ENCODE measurements at regions of chr13 and their contacts with region 1.

Region 1: GRCh38 chr13:106917673-106918556 is 350.0 kb upstream of the ARGLU1 start:
- DNase-seq: peak; percentile 77 to 91
- H3K4me3 ChIP-seq: peak overlapping the region; percentile 44
- H3K4me3 Mint-ChIP-seq: peak overlapping the region; percentile 74
- H3K27ac Mint-ChIP-seq: peak overlapping the region; percentile 92
- H3K4me1 ChIP-seq: peaks cover 25% of the 10 kb centered on the region
- H3K4me1 Mint-ChIP-seq: peaks cover 34% of the 10 kb centered on the region
- H3K27me3 ChIP-seq: no peaks in the 10 kb centered on the region
- H3K27me3 Mint-ChIP-seq: no peaks in the 10 kb centered on the region
- CTCF ChIP-seq: peak; percentile 96

Region 2: DNA sequence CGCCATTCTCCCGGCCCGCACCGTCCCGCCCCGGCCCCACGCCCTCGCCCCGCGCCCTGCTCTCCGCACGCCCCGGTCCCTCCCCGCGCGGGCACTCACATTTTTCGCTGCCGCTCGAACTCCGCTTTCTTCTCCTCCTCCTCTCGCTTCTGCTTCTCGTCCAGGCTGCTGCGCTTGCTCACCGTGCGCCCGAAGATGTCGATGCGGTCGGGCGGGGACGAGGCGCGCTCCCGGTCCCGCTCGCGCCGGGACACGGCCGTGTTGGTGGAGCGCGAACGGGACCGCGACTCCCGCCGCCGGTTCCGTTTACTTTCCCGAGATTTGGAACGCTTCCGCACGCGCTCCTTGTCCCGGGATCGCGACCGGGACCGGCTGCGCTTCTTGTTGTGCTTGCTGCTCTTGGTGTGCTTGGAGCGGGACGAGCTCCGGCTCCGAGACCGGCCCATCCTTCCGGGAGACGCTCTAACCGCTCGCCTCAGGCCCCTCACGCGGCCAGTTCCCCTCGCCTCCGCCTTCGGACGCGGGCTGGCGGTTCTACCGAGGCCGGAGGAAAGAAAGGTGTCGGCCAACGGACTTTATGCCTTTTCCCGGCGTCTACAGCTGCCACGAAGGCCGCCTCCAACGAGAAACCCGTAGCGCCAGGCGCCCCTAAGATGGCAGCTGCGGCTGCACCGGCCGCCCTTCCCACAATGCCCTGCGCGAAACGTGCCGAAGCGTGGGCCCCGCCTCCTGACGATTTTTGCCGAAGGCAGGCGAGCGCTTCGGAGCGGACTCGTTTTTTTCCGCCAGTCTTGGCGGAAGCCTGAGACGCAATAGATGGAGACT is 350.2 kb before region 1 on chr13 and contains the start of gene ARGLU1:
- CTCF ChIA-PET with region 1: no interaction called
- POLR2A ChIA-PET with region 1: no interaction called
- intact Hi-C with region 1: loop called (anchors 1 kb)
- DNase-seq: peak; percentile 93 to 97
- H3K4me3 ChIP-seq: peak within 1 kb of the TSS; percentile 93
- H3K4me3 Mint-ChIP-seq: peak within 1 kb of the TSS; percentile 87
- H3K27ac Mint-ChIP-seq: peak within 1 kb of the TSS; percentile 95
- H3K4me1 ChIP-seq: peaks cover 41% of the 10 kb centered on the region
- H3K4me1 Mint-ChIP-seq: peaks cover 16% of the 10 kb centered on the region
- H3K27me3 ChIP-seq: no peaks in the 10 kb centered on the region
- H3K27me3 Mint-ChIP-seq: no peaks in the 10 kb centered on the region
- CTCF ChIP-seq: no peak
- total RNA-seq, gene ARGLU1: 127 and 137 TPM in 2 replicates

Region 3: DNA sequence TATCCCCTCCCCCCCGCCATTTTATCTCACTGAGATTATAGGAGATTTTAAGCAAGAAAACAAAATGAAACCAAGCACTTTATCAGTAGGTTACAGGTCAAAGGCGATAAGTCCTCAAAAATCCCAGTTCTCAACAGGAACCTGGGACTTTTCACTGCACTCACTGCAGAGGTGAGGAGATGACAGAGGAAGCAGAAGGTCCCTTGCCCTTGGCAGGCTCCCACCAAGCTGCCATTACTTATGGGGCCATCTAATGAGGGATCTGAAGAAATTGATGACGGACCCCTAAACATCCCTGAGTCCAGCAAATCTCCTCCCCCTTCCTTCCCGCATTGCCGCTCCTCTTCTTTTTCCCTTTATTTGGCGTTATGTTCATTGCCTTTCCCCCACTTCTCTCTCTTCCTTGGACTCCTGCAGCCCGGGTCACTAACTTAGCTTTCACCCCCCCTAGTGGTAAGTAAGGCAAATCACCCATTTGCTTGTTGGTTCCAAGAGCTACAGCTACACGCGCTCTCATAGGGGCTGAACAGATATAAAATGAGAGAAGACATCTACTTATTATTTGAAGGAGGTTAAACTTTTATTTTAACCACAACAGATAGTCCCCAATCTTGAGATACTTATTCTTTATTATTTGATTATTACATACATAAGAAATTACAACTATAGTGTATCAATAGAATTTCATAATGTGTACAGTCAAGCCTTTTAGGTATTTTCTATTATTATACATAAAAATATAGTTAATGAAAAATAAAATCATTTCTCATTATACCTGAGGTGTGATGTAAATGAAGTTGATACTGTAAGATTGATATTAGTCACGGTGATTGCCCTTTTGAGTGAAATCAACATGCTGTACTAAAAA is 298.0 kb before region 1 on chr13:
- CTCF ChIA-PET with region 1: interaction called, 6 read pairs
- POLR2A ChIA-PET with region 1: no interaction called
- intact Hi-C with region 1: loop called (anchors 1 kb)
- DNase-seq: peak in 1 of 2 experiments; percentile 53
- H3K4me3 ChIP-seq: 0 out of 2 replicates have a peak overlapping the region, but pooled peaks have one; percentile 2
- H3K4me3 Mint-ChIP-seq: peak overlapping the region; percentile 6
- H3K27ac Mint-ChIP-seq: no peak overlapping the region
- H3K4me1 ChIP-seq: peaks cover 8% of the 10 kb centered on the region; the same call in 1 of the 2 replicates
- H3K4me1 Mint-ChIP-seq: no peaks in the 10 kb centered on the region
- H3K27me3 ChIP-seq: no peaks in the 10 kb centered on the region
- H3K27me3 Mint-ChIP-seq: no peaks in the 10 kb centered on the region
- CTCF ChIP-seq: peak; percentile 80 to 90

Region 4: DNA sequence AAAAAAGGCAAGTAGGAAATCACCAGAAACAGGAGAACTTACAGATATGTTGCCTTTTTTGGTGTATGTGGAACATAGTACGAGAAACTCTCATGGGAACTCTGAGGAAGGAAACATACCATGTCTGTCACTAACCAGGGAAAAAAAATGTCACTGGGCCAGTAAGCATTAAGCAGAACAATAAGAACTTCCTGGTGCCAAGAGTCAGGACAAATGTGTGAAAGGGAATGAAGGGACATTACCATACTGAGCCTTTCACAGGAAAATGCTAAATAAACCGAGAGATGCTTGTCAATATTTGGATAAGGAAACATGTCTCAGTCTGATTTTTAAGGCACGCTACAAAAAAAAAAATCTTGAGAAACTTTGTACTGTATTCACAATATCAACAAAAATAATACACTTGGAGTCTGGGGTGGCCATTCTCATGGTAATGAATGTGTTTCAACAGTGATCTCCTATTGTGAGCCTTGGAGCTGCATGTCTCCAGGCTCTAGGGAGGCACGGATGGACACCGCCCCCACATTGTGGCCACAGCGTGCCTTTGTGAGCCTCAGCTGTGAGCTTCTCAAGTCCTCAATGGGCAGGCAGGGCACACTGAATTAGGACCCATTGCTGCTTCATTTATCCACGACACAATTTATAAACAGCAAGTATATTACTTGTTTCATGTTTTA is 237.0 kb before region 1 on chr13:
- CTCF ChIA-PET with region 1: no interaction called
- POLR2A ChIA-PET with region 1: no interaction called
- intact Hi-C with region 1: loop called (anchors 5 kb)
- DNase-seq: no peak
- H3K4me3 ChIP-seq: no peak overlapping the region
- H3K4me3 Mint-ChIP-seq: no peak overlapping the region
- H3K27ac Mint-ChIP-seq: no peak overlapping the region
- H3K4me1 ChIP-seq: peaks cover 43% of the 10 kb centered on the region
- H3K4me1 Mint-ChIP-seq: peaks cover 50% of the 10 kb centered on the region
- H3K27me3 ChIP-seq: no peaks in the 10 kb centered on the region
- H3K27me3 Mint-ChIP-seq: no peaks in the 10 kb centered on the region
- CTCF ChIP-seq: no peak

Region 5: DNA sequence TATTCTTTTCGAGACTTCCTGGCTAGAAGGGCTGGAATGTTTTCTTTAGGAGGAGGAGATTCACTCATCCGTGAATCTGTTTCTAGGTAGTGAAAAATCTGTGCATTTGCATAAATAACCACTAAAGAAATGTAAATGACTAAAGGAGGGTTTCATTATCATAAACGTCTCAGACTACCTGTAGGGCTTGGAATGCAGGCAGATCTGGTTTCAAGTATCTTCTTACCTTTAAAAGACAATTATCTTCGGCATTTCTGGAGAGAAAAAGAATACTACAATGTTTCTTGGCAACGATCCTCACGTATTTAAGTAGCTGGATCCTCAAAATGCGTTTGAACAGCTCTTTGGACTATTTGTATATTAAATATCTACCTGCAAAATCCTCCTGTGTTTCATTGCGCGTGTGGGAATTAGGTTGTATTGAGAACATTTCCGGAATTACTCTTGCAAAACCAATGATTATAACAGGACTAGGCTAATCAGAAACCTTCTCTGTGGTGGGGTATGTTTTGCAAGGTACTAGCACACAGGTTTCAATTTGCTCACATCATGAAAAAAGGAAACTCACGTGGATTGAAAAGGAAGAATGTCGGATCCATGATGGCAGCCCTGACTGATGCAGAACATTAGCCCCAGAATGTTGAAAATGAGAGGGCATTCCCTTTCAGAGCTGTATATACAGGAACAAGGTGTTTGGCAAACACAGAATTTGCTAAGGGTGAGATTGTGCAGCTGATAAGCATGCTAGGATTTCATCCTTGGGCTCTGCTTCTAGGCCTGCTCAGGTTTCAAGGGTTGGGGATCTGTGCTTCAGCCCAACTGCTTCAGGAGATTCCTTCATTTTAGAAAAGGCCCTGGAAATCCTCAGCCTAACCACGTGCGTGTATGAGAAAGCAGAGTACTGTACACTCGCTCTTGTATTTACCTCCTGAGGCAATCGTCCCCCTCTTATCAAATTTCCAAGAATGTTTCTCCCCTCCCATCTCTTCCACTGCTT is 58.7 kb before region 1 on chr13:
- CTCF ChIA-PET with region 1: no interaction called
- POLR2A ChIA-PET with region 1: no interaction called
- intact Hi-C with region 1: loop called (anchors 1 kb)
- DNase-seq: peak; percentile 63 to 75
- H3K4me3 ChIP-seq: no peak overlapping the region
- H3K4me3 Mint-ChIP-seq: peak overlapping the region; percentile 41
- H3K27ac Mint-ChIP-seq: peak overlapping the region; percentile 80
- H3K4me1 ChIP-seq: peaks cover 44% of the 10 kb centered on the region
- H3K4me1 Mint-ChIP-seq: peaks cover 23% of the 10 kb centered on the region
- H3K27me3 ChIP-seq: no peaks in the 10 kb centered on the region
- H3K27me3 Mint-ChIP-seq: no peaks in the 10 kb centered on the region
- CTCF ChIP-seq: no peak

Region 6: GRCh38 chr13:106996867-106997618 is 79.1 kb after region 1 on chr13:
- CTCF ChIA-PET with region 1: no interaction called
- POLR2A ChIA-PET with region 1: interaction called, 3 read pairs
- intact Hi-C with region 1: loop called (anchors 2 kb)
- DNase-seq: peak; percentile 63 to 76
- H3K4me3 ChIP-seq: no peak overlapping the region
- H3K4me3 Mint-ChIP-seq: peak overlapping the region; percentile 32
- H3K27ac Mint-ChIP-seq: peak overlapping the region; percentile 50
- H3K4me1 ChIP-seq: peaks cover 21% of the 10 kb centered on the region
- H3K4me1 Mint-ChIP-seq: peaks cover 27% of the 10 kb centered on the region
- H3K27me3 ChIP-seq: no peaks in the 10 kb centered on the region
- H3K27me3 Mint-ChIP-seq: no peaks in the 10 kb centered on the region
- CTCF ChIP-seq: no peak

Region 7: DNA sequence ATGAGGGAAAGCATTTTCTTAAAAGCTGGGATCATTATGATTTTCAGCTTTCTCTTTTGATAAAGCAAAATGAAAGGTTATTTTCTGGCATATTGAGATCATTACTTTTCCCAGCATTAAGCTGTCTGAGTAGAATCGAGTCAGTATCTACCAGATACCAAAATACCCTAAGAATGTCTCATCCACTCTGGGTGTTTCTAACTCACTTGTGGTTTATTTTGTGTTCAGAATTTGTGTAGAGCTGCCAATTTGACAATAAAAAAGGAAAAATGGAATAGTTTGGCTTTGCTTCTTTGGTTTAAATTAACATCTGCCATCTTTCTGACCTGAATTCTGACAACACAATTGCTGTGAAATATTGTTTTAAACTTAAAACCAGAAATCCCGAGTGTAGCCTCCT is 88.7 kb after region 1 on chr13:
- CTCF ChIA-PET with region 1: interaction called, 8 read pairs
- POLR2A ChIA-PET with region 1: no interaction called
- intact Hi-C with region 1: loop called (anchors 2 kb)
- DNase-seq: no peak
- H3K4me3 ChIP-seq: peak overlapping the region; percentile 1; the same call in 1 of the 2 replicates
- H3K4me3 Mint-ChIP-seq: peak overlapping the region; percentile 62
- H3K27ac Mint-ChIP-seq: peak overlapping the region; percentile 83
- H3K4me1 ChIP-seq: peaks cover 43% of the 10 kb centered on the region
- H3K4me1 Mint-ChIP-seq: peaks cover 43% of the 10 kb centered on the region
- H3K27me3 ChIP-seq: no peaks in the 10 kb centered on the region
- H3K27me3 Mint-ChIP-seq: no peaks in the 10 kb centered on the region
- CTCF ChIP-seq: no peak

Measured in Caco-2 (cell line).